H1 (cell line): ENCODE measurements at regions of chr1 and their contacts with region 1.

Region 1: DNA sequence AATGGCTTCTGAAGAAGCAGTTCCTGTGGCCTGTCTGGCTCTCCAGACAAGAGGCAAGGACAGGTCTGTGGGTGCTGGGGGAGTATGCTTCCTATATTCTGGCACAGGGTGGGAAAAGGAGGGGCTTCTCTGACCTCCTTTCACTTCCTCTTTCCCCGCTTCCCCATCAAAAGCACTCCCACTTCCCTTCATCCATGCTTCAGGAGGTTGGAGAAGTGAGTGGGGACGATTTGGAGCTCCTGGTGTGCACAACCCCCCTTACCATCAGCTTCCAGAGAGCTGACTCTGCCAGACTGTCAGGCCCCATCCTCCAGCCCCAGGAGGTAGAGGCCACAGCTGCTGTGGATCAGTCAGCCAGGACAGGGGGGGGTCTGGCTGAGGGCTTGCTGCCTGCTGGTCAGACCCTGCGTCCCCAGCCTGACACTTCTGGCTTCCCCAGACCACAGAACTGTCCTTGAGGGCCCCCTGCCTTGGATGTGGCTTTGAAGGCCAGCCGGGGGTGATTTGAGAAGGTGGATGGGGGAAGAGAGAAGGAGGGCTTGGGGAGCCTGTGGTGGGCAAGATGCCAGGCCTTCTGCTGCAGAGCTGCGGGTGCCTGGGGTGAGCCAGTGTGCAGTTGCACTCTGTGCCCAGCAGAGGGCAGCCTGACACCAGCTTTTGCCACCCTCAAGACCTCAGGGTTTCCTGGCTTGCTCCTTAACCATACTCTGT is 21.5 kb upstream of the TMEM222 start:
- DNase-seq: peak in 1 of 2 experiments; percentile 90
- H3K4me3 ChIP-seq: no peak overlapping the region
- H3K27ac ChIP-seq: no peak overlapping the region
- H3K4me1 ChIP-seq: peaks cover 0 to 22% (median 11%) of the 10 kb centered on the region in 4 experiments; a peak in 6 of 7 replicates
- H3K27me3 ChIP-seq: no peaks in the 10 kb centered on the region
- CTCF ChIP-seq: peak; percentile 97 to 99 (median 99)
- EP300 ChIP-seq: no peak
- POLR2A ChIP-seq: no peak
- RAD21 ChIP-seq: peak; percentile 99 to 100

Region 2: DNA sequence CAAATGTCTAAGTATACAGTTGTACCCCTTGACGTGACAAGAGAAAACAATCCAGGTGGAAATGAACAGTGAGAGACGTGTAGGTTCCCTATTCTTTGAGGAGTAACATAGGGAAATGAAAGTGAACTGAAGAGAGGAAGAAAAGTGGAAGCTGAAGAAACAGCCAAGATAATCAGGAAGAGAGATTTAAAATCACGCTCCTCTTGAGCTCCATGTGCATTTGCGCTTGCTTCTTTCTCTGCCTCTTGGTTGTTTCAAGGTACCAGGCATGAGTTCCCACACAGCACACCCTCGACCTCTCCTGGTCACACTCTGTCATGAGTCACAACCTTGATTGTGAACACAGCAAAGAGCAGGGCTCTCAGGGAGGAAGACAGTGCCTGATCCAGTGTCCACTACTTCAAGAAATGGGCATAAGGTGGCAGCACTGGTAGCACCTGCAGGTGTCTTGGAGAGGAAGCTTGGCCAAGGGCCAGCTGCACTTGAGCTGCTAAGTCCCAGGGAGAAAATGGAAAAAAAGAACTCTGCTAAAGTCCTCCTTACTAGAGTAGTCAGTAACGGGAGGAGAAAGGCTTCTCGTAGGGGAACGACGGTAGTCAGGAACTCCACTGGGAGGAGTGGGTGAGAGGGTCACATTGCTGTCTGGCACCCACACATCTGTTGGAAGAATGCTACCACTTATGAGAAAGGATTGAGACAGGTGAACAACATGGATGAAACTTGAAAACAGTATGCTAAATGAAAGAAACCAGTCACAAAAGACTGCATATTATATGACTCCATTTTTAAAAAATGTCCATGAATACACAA is 623.0 kb before region 1 on chr1:
- CTCF ChIA-PET with region 1: no interaction called
- POLR2A ChIA-PET with region 1: no interaction called
- DNase-seq: peak in 1 of 2 experiments; percentile 58
- H3K4me3 ChIP-seq: no peak overlapping the region
- H3K27ac ChIP-seq: no peak overlapping the region
- H3K4me1 ChIP-seq: peaks cover 0 to 3% (median 0%) of the 10 kb centered on the region in 4 experiments; a peak in 1 of 7 replicates
- H3K27me3 ChIP-seq: peaks cover 0 to 2% (median 0%) of the 10 kb centered on the region in 4 experiments; a peak in 1 of 7 replicates
- CTCF ChIP-seq: peak; percentile 40 to 88 (median 71)
- EP300 ChIP-seq: no peak
- POLR2A ChIP-seq: no peak
- RAD21 ChIP-seq: peak; percentile 68 to 77

Region 3: GRCh38 chr1:27102707-27103491 is 197.6 kb before region 1 on chr1:
- CTCF ChIA-PET with region 1: interaction called, 131 read pairs
- POLR2A ChIA-PET with region 1: no interaction called
- DNase-seq: peak; percentile 49 to 100
- H3K4me3 ChIP-seq: no peak overlapping the region
- H3K27ac ChIP-seq: no peak overlapping the region
- H3K4me1 ChIP-seq: peaks cover 0 to 21% (median 14%) of the 10 kb centered on the region in 4 experiments; a peak in 6 of 7 replicates
- H3K27me3 ChIP-seq: no peaks in the 10 kb centered on the region
- CTCF ChIP-seq: peak in 2 of 3 experiments; percentile 97 to 99; a peak in 3 of 4 replicates
- EP300 ChIP-seq: no peak
- POLR2A ChIP-seq: no peak
- RAD21 ChIP-seq: peak; percentile 98 to 99

Region 4: DNA sequence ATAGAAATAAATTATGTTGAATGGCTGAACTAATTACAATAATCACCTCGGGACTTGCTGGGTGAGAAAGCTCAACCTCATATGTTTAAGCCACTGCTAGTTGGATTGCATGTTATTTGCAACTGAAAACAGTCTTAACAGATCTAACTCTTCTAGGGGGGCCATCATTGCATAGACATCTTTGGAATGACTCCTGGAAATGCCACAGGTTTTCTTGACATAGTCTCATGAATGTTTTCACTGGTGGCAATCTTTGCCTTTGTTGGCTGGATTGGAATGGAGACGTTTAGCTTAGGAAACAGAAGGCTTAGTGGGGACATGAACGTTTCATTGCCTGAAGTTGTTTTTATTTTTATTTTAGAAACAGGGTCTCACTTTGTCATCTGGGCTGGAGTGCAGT is 74.9 kb before region 1 on chr1:
- CTCF ChIA-PET with region 1: no interaction called
- POLR2A ChIA-PET with region 1: no interaction called
- DNase-seq: no peak
- H3K4me3 ChIP-seq: no peak overlapping the region
- H3K27ac ChIP-seq: no peak overlapping the region
- H3K4me1 ChIP-seq: no peaks in the 10 kb centered on the region
- H3K27me3 ChIP-seq: no peaks in the 10 kb centered on the region
- CTCF ChIP-seq: no peak
- EP300 ChIP-seq: no peak
- POLR2A ChIP-seq: no peak
- RAD21 ChIP-seq: no peak

Region 5: GRCh38 chr1:27284425-27285273 is 15.8 kb before region 1 on chr1:
- CTCF ChIA-PET with region 1: interaction called, 132 read pairs
- POLR2A ChIA-PET with region 1: no interaction called
- DNase-seq: peak in 1 of 2 experiments; percentile 90
- H3K4me3 ChIP-seq: no peak overlapping the region
- H3K27ac ChIP-seq: no peak overlapping the region
- H3K4me1 ChIP-seq: no peaks in the 10 kb centered on the region
- H3K27me3 ChIP-seq: no peaks in the 10 kb centered on the region
- CTCF ChIP-seq: peak; percentile 76 to 81 (median 77)
- EP300 ChIP-seq: no peak
- POLR2A ChIP-seq: no peak
- RAD21 ChIP-seq: peak; percentile 74 to 75

Region 6: DNA sequence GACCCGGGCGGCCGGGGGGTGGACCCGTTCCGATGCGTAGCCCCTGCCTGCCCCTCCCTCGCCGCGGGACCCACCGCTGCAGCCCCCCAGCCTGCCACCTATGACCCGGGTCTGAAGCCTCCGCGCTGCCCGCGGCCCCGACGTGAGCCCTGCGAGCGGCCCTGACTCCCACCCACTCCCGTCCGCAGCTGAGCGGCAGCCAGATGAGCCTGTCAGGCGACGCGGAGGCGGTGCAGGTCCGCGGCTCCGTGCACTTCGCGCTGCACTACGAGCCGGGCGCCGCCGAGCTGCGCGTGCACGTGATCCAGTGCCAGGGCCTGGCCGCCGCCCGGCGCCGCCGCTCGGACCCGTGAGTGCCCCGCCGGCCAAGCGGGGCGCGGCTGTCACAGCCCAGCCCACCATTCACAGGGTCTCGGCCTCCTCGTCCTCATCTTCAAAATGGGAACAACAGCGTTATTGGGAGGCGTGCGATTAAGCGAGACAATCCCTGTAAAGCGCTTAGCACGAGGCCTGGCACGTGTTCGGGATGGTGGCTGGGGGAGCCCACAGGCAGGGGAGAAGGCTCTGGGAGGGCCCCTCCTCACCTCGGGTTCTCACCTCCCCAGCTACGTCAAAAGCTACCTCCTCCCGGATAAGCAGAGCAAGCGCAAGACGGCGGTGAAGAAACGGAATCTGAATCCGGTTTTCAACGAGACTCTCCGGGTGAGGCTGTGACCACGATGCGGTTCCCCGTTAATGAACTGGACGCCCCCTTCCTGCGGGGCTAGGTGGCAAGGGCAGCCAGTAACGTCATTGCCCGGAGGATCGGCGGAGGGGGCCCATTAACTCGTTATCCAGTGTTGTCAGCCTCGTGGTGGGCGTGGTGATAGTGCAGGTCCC is 49.5 kb after region 1 on chr1:
- CTCF ChIA-PET with region 1: interaction called, 321 read pairs
- POLR2A ChIA-PET with region 1: interaction called, 10 read pairs
- DNase-seq: peak in 1 of 2 experiments; percentile 83
- H3K4me3 ChIP-seq: peak overlapping the region; percentile 47 to 63 (median 51)
- H3K27ac ChIP-seq: no peak overlapping the region
- H3K4me1 ChIP-seq: peaks cover 0 to 20% (median 8%) of the 10 kb centered on the region in 4 experiments; a peak in 6 of 7 replicates
- H3K27me3 ChIP-seq: peaks cover 0 to 8% (median 6%) of the 10 kb centered on the region in 4 experiments; a peak in 5 of 7 replicates
- CTCF ChIP-seq: no peak
- EP300 ChIP-seq: no peak; a peak in 1 of 3 replicates
- POLR2A ChIP-seq: 0 out of 3 replicates have a peak, but pooled peaks of 1 of the 2 experiments have one; percentile 24
- RAD21 ChIP-seq: no peak

Region 7: GRCh38 chr1:27372808-27373690 is 72.6 kb after region 1 on chr1:
- CTCF ChIA-PET with region 1: interaction called, 195 read pairs
- POLR2A ChIA-PET with region 1: interaction called, 5 read pairs
- DNase-seq: peak in 1 of 2 experiments; percentile 64
- H3K4me3 ChIP-seq: no peak overlapping the region
- H3K27ac ChIP-seq: no peak overlapping the region
- H3K4me1 ChIP-seq: peaks cover 0 to 3% (median 0%) of the 10 kb centered on the region in 4 experiments; a peak in 1 of 7 replicates
- H3K27me3 ChIP-seq: no peaks in the 10 kb centered on the region
- CTCF ChIP-seq: peak; percentile 61 to 69 (median 63)
- EP300 ChIP-seq: no peak
- POLR2A ChIP-seq: no peak
- RAD21 ChIP-seq: peak; percentile 41 to 57; a peak in 3 of 4 replicates

Region 8: DNA sequence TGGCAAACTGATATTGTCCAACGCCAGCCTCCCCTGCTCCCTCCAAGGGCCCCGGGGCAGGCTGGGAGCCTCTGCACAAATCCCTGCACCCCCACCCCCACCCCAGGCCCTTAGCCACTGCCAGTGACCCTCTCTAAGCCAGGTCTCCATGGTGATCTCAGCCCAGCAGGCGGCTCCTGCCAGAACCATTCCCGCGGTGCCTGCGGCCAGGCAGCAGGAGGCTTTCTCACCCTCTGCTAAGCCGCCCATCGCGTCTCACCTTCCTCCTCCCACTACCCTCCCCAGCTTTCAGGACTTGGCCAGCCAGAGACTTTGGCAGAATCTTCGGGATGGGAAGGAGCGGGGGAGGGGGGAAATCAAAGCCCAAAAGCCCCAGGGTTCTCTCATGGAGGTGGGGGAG is 236.3 kb after region 1 on chr1:
- CTCF ChIA-PET with region 1: no interaction called
- POLR2A ChIA-PET with region 1: no interaction called
- DNase-seq: peak in 1 of 2 experiments; percentile 66
- H3K4me3 ChIP-seq: no peak overlapping the region
- H3K27ac ChIP-seq: peak overlapping the region; percentile 11; the same call in 1 of the 2 replicates
- H3K4me1 ChIP-seq: peaks cover 12 to 33% (median 23%) of the 10 kb centered on the region in 4 experiments
- H3K27me3 ChIP-seq: no peaks in the 10 kb centered on the region
- CTCF ChIP-seq: no peak
- EP300 ChIP-seq: no peak
- POLR2A ChIP-seq: no peak
- RAD21 ChIP-seq: peak in 1 of 2 experiments; percentile 15; a peak in 1 of 4 replicates